ENCODE measurements at regions of chr18 and their contacts with region 1.

Region 1: GRCh38 chr18:47175908-47176575 is at the start of gene IER3IP1:
- DNase-seq: peak; percentile 87 to 98 (median 90)

Region 2: GRCh38 chr18:46028536-46028891 is 1147.5 kb before region 1 on chr18:
- intact Hi-C with region 1: loop called (anchors 5 kb)
- DNase-seq: no peak

Region 3: GRCh38 chr18:47121146-47121545 is 54.9 kb before region 1 on chr18:
- intact Hi-C with region 1: no loop called
- DNase-seq: no peak

Region 4: DNA sequence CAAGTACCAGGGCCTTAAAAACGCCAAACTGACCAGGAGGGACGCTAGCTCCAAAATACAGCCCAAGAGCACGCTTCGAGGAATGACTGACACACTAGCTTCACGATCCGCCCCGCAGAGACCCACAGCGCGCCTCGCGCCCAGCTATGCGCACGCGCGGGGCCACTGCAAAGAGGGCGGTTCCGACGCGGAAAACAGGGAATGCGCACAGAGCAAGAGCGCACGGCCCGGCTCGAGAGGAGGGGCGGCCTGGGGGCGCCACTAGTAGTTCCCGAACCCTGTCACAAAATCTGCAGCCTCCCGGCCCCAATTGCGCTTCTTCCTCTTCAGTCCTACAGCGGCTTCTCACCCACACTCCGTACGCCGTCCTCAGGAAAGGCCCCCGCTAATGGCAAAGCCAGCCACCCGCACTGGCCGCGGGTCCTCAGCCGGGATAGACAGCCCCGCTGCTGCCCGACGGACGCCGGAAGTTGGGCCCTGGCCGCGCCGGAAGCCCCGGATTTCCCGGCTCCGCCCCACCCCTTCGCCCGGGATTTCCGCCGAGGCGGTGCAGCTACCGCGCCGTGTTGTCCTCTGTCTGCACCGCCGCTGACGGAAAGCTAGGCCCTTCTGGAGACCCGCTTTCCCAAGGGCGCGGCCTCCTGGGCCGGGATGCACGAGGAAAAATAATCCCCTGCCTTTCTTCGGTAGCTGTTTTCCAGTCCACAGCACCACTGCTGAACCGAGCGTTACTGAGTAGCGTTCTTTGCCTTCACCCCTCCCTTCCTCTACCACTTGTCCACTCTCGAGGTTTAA is 25.8 kb before region 1 on chr18 and contains the start of gene HDHD2:
- intact Hi-C with region 1: loop called (anchors 2 kb)
- DNase-seq: peak; percentile 83 to 98 (median 90)

Region 5: DNA sequence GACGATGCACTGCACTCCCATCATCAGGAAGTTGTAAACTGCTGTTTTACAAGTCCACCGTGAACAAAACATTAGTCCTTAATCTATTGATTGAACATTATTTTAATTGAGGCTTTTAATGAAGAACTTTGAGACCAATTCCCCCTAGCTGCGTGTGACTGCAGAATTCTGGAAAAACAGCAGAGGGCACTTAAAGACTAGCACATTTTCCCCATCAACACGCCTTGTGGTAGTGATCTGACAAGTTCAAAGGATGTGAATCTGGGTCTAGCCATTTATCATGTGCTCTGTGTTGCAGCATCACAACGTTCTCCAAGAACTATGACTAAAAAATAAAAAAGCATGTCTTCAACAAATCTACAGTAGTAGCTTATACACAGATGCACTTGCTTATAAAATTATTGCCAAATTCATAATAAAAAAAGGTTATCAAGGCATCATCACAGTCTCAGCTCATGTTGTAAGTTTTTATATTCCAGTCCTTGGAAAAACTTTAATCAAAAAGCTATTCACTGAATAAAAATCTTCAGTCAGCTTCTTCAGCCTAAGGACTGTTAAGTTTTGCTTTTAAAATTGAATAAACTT is 39.6 kb after region 1 on chr18:
- intact Hi-C with region 1: no loop called
- DNase-seq: peak in 4 of 10 donors; percentile 20 to 86 (median 28)

Measured in posterior cingulate gyrus (tissue), 11 donors.